Natural killer cell (primary cell): ENCODE measurements at regions of chr4 and their contacts with region 1.

Region 1: DNA sequence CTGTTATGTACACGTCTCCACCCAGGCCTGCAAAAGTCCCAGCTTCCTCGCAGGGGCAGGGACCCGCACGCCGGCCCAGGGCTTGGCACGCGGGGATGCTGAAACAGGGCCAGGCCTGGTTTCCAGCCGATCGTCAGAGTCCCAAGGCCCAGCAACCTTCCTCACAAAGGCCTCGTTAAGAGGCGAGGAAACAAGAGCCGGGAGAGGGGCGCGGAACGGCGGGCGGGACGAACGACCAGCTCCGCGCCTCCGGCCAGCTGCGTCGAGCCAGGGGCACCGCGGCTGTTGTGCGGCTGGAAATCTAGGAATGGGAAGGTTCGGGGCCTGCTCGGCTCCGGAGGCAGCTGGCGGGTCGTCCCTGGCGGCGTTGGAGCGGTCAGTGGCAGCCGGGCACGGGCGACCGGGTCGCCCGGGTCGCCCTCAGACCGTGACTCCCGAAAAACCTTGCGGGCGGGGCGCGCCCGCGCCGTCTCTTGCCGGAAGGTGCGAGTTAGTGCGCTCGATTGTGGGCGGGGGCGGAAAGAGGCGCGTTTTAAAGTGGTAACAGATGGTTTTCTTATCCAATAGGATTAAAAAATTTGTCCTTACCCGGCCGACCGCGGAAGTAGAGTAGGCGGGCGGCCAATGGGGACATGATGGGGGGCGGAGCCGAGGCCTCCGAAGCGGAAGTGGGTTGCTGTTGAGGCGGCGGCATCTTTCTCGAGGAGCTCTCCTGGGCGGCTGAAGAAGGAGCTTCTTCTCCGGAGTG is at the start of gene RNF4:
- DNase-seq: peak; percentile 92 to 98
- ATAC-seq: peak; percentile 84 to 93 (median 88)
- H3K4me3 ChIP-seq: peak within 1 kb of the TSS; percentile 87
- H3K4me3 Mint-ChIP-seq: peak within 1 kb of the TSS; percentile 97
- H3K27ac ChIP-seq: peak within 1 kb of the TSS; percentile 87
- H3K27ac Mint-ChIP-seq: peak within 1 kb of the TSS; percentile 97 to 98
- H3K4me1 ChIP-seq: peaks cover 38% of the 10 kb centered on the region
- H3K4me1 Mint-ChIP-seq: peaks cover 48 to 57% of the 10 kb centered on the region in 2 donors
- H3K27me3 ChIP-seq: no peaks in the 10 kb centered on the region
- H3K27me3 Mint-ChIP-seq: no peaks in the 10 kb centered on the region
- CTCF ChIP-seq: no peak
- total RNA-seq, gene RNF4: 103 to 130 (median 123) TPM

Region 2: GRCh38 chr4:1463088-1463926 is 1005.3 kb before region 1 on chr4:
- intact Hi-C with region 1: no loop called
- DNase-seq: no peak
- ATAC-seq: no peak
- H3K4me3 ChIP-seq: no peak overlapping the region
- H3K4me3 Mint-ChIP-seq: no peak overlapping the region
- H3K27ac ChIP-seq: no peak overlapping the region
- H3K27ac Mint-ChIP-seq: no peak overlapping the region
- H3K4me1 ChIP-seq: no peaks in the 10 kb centered on the region
- H3K4me1 Mint-ChIP-seq: no peaks in the 10 kb centered on the region
- H3K27me3 ChIP-seq: no peaks in the 10 kb centered on the region
- H3K27me3 Mint-ChIP-seq: peaks cover 10 to 16% of the 10 kb centered on the region in 2 donors
- CTCF ChIP-seq: no peak

Region 3: DNA sequence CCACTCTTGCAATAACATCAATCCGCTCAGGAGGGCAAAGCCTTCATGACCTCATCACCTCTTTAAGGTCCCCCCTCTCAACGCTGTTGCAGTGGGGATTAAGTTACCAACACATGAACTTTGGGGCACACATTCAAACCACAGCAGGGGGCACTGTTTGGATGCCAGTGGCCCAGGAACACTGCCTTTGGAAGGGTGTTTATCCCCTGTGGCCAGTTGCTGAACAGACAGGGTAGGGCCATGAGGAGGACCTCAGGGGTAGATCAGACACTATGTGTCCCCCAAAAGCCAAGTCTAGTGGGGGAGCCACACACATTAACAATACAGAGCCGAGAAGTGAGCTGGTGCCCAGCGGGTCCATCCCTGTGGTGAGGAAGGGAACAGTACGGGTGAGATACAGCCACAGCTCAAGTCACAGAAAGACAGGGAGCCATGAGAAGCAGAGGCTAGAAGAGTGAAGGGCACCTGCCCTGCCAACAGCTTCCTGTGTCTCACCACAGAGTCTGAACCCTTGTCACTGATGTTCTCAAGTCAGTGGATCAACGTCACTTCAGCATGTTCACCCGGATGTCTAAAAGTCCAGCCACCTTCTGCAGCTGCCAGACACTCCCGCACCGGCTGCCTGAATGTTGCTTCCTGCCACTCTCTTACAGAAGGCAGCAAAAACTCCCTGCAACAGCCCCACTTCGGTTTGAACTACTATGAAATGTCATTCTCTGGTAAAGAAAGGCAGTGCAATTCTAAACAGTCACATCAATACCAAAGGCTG is 186.9 kb before region 1 on chr4:
- intact Hi-C with region 1: loop called (anchors 5 kb)
- DNase-seq: peak; percentile 79 to 97
- ATAC-seq: peak; percentile 85 to 94 (median 87)
- H3K4me3 ChIP-seq: no peak overlapping the region
- H3K4me3 Mint-ChIP-seq: peak overlapping the region; percentile 76
- H3K27ac ChIP-seq: peak overlapping the region; percentile 89
- H3K27ac Mint-ChIP-seq: peak overlapping the region; percentile 95 to 97
- H3K4me1 ChIP-seq: peaks cover 33% of the 10 kb centered on the region
- H3K4me1 Mint-ChIP-seq: peaks cover 27 to 46% of the 10 kb centered on the region in 2 donors
- H3K27me3 ChIP-seq: no peaks in the 10 kb centered on the region
- H3K27me3 Mint-ChIP-seq: no peaks in the 10 kb centered on the region
- CTCF ChIP-seq: peak; percentile 27

Region 4: DNA sequence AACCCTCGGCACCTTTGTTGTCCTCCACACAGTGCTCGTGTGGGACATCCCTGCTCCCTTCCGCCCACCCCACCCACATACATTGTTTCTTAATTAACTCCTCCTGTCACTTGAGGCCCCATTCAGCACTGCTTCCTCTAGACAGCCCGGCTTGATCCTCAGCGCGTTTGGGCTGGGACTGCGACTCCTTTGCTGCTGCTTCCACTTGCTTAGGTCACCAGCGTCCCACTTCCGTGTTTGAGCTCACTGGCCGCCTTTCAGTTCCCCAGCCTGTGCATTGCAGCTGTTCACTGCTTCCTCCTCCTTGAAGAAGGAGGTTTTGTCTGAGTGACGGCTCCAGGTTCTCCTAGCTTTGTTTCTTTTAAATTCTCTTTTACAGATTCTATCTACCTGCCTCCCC is 16.4 kb after region 1 on chr4:
- intact Hi-C with region 1: loop called (anchors 2 kb)
- DNase-seq: peak; percentile 52 to 83
- ATAC-seq: peak; percentile 82 to 84 (median 82)
- H3K4me3 ChIP-seq: no peak overlapping the region
- H3K4me3 Mint-ChIP-seq: peak overlapping the region; percentile 67
- H3K27ac ChIP-seq: peak overlapping the region; percentile 78
- H3K27ac Mint-ChIP-seq: peak overlapping the region; percentile 87 to 96
- H3K4me1 ChIP-seq: peaks cover 84% of the 10 kb centered on the region
- H3K4me1 Mint-ChIP-seq: peaks cover 80 to 85% of the 10 kb centered on the region in 2 donors
- H3K27me3 ChIP-seq: no peaks in the 10 kb centered on the region
- H3K27me3 Mint-ChIP-seq: no peaks in the 10 kb centered on the region
- CTCF ChIP-seq: no peak

Region 5: DNA sequence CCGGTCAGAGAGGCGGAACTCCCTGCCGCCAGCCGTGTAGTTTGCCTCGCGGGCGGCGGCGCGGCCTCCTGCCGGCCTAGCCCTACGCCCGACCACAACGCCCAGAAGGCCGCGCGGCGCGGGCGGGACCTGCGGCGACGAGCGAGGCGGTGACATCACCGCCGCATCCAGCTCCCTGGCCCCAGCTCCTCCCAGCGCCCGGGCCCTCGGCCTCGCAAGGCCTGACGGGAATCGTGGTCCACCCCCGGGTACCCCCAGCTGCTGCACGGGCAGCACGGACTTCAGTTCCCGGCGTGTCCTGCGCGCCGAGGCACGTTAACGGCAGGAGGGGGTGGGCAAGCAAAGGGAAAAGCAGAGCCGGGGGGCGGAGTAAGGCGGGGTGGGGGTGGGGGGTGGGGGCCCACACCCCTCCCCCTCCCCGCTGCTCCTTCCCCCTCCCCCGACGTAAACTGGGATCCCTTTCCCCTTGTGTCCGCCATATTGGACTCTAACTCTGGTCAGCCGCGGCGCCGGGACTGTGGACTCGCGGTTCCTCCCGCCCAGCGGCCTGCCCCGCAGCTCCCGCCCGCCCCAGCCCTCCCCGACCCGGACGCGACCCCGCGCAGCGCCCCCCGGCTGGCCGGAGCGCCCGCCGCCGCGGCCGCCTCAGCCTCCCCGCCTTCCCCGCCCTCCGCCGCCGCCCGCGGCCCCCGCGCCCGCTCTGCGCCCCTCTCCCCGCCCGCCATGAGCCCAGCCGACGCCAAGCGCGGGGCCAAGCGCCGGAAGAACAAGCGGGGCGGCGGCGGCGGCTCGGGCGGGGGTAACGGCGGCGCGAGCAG is 67.8 kb after region 1 on chr4 and contains the start of gene FAM193A:
- intact Hi-C with region 1: loop called (anchors 1 kb)
- DNase-seq: peak; percentile 97 to 99
- ATAC-seq: peak; percentile 93 to 98 (median 93)
- H3K4me3 ChIP-seq: peak within 1 kb of the TSS; percentile 57
- H3K4me3 Mint-ChIP-seq: peak within 1 kb of the TSS; percentile 88
- H3K27ac ChIP-seq: peak within 1 kb of the TSS; percentile 71
- H3K27ac Mint-ChIP-seq: peak within 1 kb of the TSS; percentile 83 to 89
- H3K4me1 ChIP-seq: peaks cover 27% of the 10 kb centered on the region
- H3K4me1 Mint-ChIP-seq: peaks cover 10 to 14% of the 10 kb centered on the region in 2 donors
- H3K27me3 ChIP-seq: no peaks in the 10 kb centered on the region
- H3K27me3 Mint-ChIP-seq: no peaks in the 10 kb centered on the region
- CTCF ChIP-seq: no peak
- total RNA-seq, gene FAM193A: 39.4 to 49.3 (median 48.1) TPM

Region 6: GRCh38 chr4:2981256-2981819 is 512.7 kb after region 1 on chr4:
- intact Hi-C with region 1: no loop called
- DNase-seq: no peak
- ATAC-seq: no peak
- H3K4me3 ChIP-seq: no peak overlapping the region
- H3K4me3 Mint-ChIP-seq: no peak overlapping the region
- H3K27ac ChIP-seq: no peak overlapping the region
- H3K27ac Mint-ChIP-seq: no peak overlapping the region
- H3K4me1 ChIP-seq: no peaks in the 10 kb centered on the region
- H3K4me1 Mint-ChIP-seq: peaks cover 5 to 6% of the 10 kb centered on the region in 2 donors
- H3K27me3 ChIP-seq: no peaks in the 10 kb centered on the region
- H3K27me3 Mint-ChIP-seq: peaks cover 0 to 3% of the 10 kb centered on the region in 2 donors
- CTCF ChIP-seq: no peak